ENCODE measurements at regions of chr5 and their contacts with region 1.

Region 1: GRCh38 chr5:149381987-149382340 is 2.9 kb upstream of the IL17B start:
- DNase-seq: peak; percentile 78 to 93 (median 84)
- H3K4me3 ChIP-seq: no peak overlapping the region
- H3K27ac ChIP-seq: peak overlapping the region in 2 of 5 donors; percentile 62 to 80
- H3K4me1 ChIP-seq: peaks cover 14 to 64% of the 10 kb centered on the region in 2 donors
- H3K27me3 ChIP-seq: no peaks in the 10 kb centered on the region
- CTCF ChIP-seq: peak; percentile 88 to 98 (median 94)
- POLR2A ChIP-seq: no peak

Region 2: DNA sequence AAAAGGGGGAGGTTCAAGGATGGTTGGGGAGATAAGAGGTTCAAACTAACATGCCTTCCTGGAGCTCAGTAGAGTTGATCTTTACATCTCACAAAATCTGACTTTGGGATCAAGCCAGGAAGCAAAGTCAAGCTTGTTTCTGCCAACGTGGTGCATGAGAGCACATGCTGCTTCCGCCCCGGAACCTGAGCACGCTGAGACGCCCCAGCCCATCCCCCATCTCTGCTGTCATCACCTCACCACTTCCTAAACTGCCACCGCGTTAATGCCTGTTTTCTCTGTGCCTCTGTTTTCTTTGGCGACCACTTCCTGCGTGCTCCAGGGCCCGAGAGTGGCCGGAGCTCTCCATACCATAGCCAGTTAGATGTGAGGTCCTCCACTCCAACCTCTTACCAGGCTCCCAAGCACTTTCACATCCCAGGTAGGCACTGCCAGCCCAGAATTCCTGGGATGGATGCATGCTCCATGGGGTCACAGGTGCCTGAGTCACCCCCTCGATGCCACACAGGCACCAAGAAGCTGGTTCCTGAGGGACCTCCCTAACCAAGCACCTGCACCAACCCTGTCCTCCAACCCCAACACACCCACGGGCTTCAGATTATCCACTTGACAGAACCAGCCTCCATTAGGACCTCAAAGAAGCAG is 141.5 kb before region 1 on chr5:
- intact Hi-C with region 1: no loop called
- DNase-seq: peak in 4 of 7 donors; percentile 21 to 55 (median 28)
- H3K4me3 ChIP-seq: no peak overlapping the region
- H3K27ac ChIP-seq: no peak overlapping the region
- H3K4me1 ChIP-seq: no peaks in the 10 kb centered on the region
- H3K27me3 ChIP-seq: no peaks in the 10 kb centered on the region
- CTCF ChIP-seq: no peak
- POLR2A ChIP-seq: no peak

Region 3: GRCh38 chr5:149429839-149430721 is 48.1 kb after region 1 on chr5:
- intact Hi-C with region 1: loop called (anchors 2 kb)
- DNase-seq: peak; percentile 60 to 90 (median 82)
- H3K4me3 ChIP-seq: peak overlapping the region in 1 of 4 donors; percentile 38
- H3K27ac ChIP-seq: peak overlapping the region; percentile 49 to 97 (median 88)
- H3K4me1 ChIP-seq: peaks cover 21 to 55% of the 10 kb centered on the region in 2 donors
- H3K27me3 ChIP-seq: no peaks in the 10 kb centered on the region
- CTCF ChIP-seq: peak in 4 of 6 experiments; percentile 19 to 38 (median 25)
- POLR2A ChIP-seq: no peak

Measured in adrenal gland (tissue), 19 donors.